Dorsolateral prefrontal cortex (tissue), 120 donors: ENCODE measurements at regions of chr19 and their contacts with region 1.

Region 1: GRCh38 chr19:480016-480855 is 16.1 kb upstream of the MADCAM1 start:
- DNase-seq: peak in 9 of 10 donors; percentile 56 to 86 (median 80)
- H3K4me3 ChIP-seq: peak overlapping the region in 47 of 59 donors; percentile 2 to 56 (median 39)
- H3K27ac ChIP-seq: peak overlapping the region in 56 of 59 donors; percentile 47 to 97 (median 84)
- H3K27me3 ChIP-seq: peaks cover 0 to 4% (median 0%) of the 10 kb centered on the region in 45 donors
- CTCF ChIP-seq: peak in 55 of 56 donors; percentile 45 to 83 (median 70)

Region 2: GRCh38 chr19:277581-278165 is 202.6 kb before region 1 on chr19:
- intact Hi-C with region 1: loop called in 1 of 2 experiments (anchors 5 kb)
- DNase-seq: no peak
- H3K4me3 ChIP-seq: no peak overlapping the region
- H3K27ac ChIP-seq: peak overlapping the region in 4 of 59 donors; percentile 22 to 43 (median 30)
- H3K27me3 ChIP-seq: no peaks in the 10 kb centered on the region
- CTCF ChIP-seq: no peak

Region 3: DNA sequence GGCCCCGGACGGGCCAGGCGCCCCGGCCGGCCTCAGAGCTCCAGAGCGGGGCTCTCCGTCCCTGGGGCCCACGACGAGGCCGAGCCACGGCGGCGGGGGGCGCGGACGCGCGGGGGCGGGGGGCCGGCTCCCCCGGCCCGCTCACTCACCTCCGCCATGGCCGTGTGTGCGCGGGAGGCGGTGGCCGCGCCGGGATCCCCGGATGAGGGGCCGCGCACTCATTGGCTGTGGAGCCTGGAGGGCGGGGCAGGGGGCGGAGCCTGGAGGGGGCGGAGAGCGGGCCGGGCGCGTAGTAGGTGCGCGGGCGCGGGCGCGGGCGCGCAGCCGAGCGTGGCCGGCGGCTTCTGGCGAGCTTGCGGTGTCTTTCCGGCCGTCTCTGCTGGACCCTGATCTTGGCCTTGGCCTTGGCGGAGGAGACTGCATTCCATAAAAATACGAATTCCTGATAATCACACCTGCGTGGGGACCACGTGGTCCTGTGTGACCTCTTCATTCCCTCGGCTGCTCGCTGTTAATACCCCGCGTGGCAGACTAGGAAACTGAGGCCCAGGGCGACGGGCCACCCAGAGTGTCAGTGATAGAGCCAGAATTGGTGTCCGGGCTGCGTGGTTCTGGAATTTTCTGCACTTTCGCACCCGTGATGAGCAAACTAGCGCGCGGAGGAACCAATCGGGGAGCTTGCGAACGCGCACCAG is 135.5 kb before region 1 on chr19 and contains the start of gene MIER2:
- intact Hi-C with region 1: loop called in 1 of 2 experiments (anchors 5 kb)
- DNase-seq: peak; percentile 78 to 97 (median 82)
- H3K4me3 ChIP-seq: peak within 1 kb of the TSS; percentile 62 to 94 (median 78)
- H3K27ac ChIP-seq: peak within 1 kb of the TSS in 45 of 59 donors; percentile 14 to 89 (median 67)
- H3K27me3 ChIP-seq: no peaks in the 10 kb centered on the region
- CTCF ChIP-seq: peak in 2 of 56 donors; percentile 15 to 27
- total RNA-seq, gene MIER2: 14.9 to 45.6 (median 27.8) TPM